ENCODE measurements at regions of chr1 and their contacts with region 1.

Region 1: GRCh38 chr1:162561037-162561616 is 395 bp upstream of the UAP1 start:
- DNase-seq: peak; percentile 98
- ATAC-seq: peak; percentile 96
- H3K4me3 Mint-ChIP-seq: peak overlapping the region; percentile 92
- H3K27ac Mint-ChIP-seq: peak overlapping the region; percentile 88
- H3K4me1 Mint-ChIP-seq: peaks cover 19% of the 10 kb centered on the region
- H3K27me3 Mint-ChIP-seq: no peaks in the 10 kb centered on the region
- CTCF ChIP-seq: no peak

Region 2: GRCh38 chr1:162497723-162498500 is 63.2 kb before region 1 on chr1 and contains the start of gene UHMK1:
- CTCF ChIA-PET with region 1: no interaction called
- POLR2A ChIA-PET with region 1: interaction called, 4 read pairs
- intact Hi-C with region 1: loop called (anchors 1 kb)
- DNase-seq: peak; percentile 76
- ATAC-seq: peak; percentile 95
- H3K4me3 Mint-ChIP-seq: peak within 1 kb of the TSS; percentile 88
- H3K27ac Mint-ChIP-seq: peak within 1 kb of the TSS; percentile 90
- H3K4me1 Mint-ChIP-seq: peaks cover 36% of the 10 kb centered on the region
- H3K27me3 Mint-ChIP-seq: no peaks in the 10 kb centered on the region
- CTCF ChIP-seq: no peak
- total RNA-seq, gene UHMK1: 60.7 and 65.6 TPM in 2 replicates

Region 3: DNA sequence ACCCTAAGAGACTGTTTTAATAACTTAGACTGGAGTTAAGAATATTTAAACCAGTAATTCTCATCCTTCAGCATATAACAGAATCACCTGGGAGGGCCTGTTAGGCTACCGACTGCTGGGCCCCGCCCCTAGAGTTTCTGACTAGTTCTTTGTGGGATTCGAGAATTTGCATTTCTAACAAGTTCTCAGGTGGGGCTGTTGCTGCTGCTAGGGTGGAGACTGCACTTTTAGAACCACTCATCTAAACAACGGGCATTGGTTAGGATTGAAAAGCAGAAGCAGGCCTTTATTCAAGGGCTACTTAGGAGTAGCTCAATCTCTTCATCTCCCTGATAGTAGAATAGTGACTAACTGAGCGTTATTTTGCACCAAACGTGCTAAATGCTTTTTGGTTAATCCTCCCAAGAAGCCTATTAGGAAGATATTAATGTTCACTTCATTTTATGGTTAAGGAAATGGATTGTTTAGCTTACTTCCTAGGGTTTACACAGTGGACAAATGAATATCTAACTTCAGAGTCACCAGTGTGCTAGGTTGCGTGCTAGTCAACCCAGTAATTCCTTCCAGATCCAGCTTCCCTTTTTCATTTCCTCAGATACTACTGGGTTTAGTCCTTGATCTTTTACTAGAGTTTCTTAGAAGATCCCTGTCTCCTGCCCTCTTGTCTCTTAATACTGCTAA is 30.7 kb before region 1 on chr1:
- CTCF ChIA-PET with region 1: no interaction called
- POLR2A ChIA-PET with region 1: no interaction called
- intact Hi-C with region 1: loop called (anchors 1 kb)
- DNase-seq: no peak
- ATAC-seq: peak; percentile 93
- H3K4me3 Mint-ChIP-seq: no peak overlapping the region
- H3K27ac Mint-ChIP-seq: peak overlapping the region; percentile 77
- H3K4me1 Mint-ChIP-seq: peaks cover 22% of the 10 kb centered on the region
- H3K27me3 Mint-ChIP-seq: no peaks in the 10 kb centered on the region
- CTCF ChIP-seq: no peak

Region 4: GRCh38 chr1:163321311-163322305 is 760.5 kb after region 1 on chr1 and contains the start of gene NUF2:
- CTCF ChIA-PET with region 1: no interaction called
- POLR2A ChIA-PET with region 1: no interaction called
- intact Hi-C with region 1: loop called (anchors 5 kb)
- DNase-seq: peak; percentile 92
- ATAC-seq: peak; percentile 98
- H3K4me3 Mint-ChIP-seq: peak within 1 kb of the TSS; percentile 94
- H3K27ac Mint-ChIP-seq: peak within 1 kb of the TSS; percentile 91
- H3K4me1 Mint-ChIP-seq: peaks cover 24% of the 10 kb centered on the region
- H3K27me3 Mint-ChIP-seq: no peaks in the 10 kb centered on the region
- CTCF ChIP-seq: no peak
- total RNA-seq, gene NUF2: 1.1 and 1.2 TPM in 2 replicates